Right ventricle myocardium superior (tissue), 1 donor: ENCODE measurements at regions of chr21 and their contacts with region 1.

Region 1: DNA sequence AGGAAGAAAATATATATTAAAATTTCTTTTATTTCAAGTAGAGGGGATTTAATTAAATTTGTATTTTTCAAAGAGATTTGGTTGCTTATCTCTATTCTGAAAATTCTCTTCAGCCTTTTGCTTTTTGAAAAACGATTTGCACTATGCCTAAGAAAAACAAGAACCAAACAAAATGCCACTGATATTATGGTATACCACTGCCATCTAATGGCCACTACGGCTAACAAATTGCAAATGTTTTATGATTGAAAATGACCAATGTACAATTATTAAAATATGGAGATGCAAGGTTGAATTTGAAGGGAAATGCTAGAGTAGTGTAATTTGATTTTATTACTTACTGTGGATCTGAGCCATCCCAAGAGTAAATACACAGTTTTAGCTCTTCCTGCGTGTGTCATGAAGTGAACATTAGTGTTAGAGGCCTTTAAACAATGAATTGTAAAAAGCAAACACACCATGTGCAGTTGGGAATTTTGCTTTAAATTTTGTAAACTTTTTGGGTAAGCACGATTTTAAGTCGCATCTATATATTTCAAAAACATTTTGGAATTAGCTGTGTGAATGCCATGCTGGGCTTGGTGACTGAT is 137.4 kb upstream of the USP25 start:
- DNase-seq: no peak
- ATAC-seq: peak; percentile 58

Region 2: DNA sequence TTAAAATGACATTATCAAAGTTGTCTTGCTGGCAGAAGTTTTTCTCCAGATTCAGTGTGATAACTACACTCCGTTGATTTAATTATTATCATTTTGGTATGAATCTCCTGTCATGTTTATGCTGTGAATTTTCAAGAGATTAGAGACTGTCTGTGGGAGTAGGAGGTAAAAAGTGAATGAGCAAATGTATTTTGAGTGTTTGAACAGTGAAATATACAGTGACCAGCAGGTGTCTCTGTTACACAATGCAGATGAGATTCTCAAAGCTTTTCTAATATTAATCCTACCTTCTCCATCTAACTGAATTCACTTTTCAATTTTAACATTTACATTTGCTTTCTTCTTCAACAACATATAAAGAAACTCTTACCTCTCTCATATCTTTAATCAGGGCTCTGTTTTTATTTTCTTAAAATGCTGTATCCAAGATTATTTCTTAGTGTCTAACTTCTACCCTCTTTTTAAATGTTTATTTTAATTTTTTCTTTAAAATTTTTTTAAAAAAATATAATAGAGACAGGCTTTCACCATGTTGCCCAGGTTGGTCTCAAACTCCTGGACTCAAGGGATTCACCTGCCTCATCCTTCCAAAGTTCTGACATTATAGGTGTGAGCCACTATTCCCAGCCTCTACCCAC is 1188.6 kb before region 1 on chr21:
- intact Hi-C with region 1: loop called (anchors 10 kb)
- DNase-seq: no peak
- ATAC-seq: peak; percentile 31

Region 3: GRCh38 chr21:15408089-15408488 is 184.3 kb before region 1 on chr21:
- intact Hi-C with region 1: no loop called
- DNase-seq: no peak
- ATAC-seq: no peak

Region 4: DNA sequence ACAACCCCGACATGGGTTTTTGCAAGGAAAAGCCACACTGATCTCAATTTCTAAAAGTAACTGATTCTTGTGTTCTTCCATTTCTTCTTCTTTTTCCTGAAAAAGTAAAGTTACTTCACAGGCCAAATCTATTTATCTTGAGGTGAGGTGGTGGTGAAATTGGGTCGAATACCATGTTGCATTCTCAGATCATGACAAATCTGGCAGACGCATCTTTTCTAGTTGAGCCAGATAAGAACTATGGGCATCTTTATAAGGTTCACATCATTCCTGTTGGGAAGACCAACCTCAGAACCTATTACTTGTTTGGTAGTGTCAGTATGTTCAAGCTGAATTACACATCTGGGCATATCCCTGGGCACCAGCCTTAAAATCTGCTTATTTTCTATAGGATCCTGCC is 58.8 kb after region 1 on chr21:
- intact Hi-C with region 1: no loop called
- DNase-seq: no peak
- ATAC-seq: no peak

Region 5: DNA sequence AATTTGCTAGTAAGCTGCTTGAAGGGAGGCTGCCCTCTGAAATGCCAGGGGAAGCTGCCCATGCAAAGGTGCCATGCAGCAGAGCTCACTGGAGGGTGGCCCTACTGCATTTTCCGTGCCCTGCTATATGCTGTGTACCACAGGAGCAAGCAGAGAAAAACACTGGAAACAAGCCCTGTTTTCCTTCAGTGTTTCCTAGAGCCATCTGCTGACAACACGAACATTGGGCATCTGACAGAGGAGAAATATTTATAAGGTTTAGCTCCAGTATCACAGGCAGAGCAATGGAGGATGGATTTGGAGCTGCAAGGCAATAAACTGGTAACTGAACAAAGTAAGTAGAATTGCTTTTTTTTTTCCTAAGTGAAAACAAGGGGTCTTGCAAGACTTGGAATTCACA is 335.8 kb after region 1 on chr21:
- intact Hi-C with region 1: no loop called
- DNase-seq: no peak
- ATAC-seq: no peak